Ascending aorta (tissue), 2 donors: ENCODE measurements at regions of chrX and their contacts with region 1.

Region 1: GRCh38 chrX:34656842-34657725 is at the start of gene TMEM47:
- DNase-seq: peak; percentile 18 to 84
- H3K4me3 ChIP-seq: peak within 1 kb of the TSS; percentile 66 to 80
- H3K27ac ChIP-seq: peak within 1 kb of the TSS; percentile 85 to 90
- H3K4me1 ChIP-seq: no peaks in the 10 kb centered on the region
- H3K27me3 ChIP-seq: no peaks in the 10 kb centered on the region
- CTCF ChIP-seq: no peak
- total RNA-seq, gene TMEM47: 117 TPM

Region 2: DNA sequence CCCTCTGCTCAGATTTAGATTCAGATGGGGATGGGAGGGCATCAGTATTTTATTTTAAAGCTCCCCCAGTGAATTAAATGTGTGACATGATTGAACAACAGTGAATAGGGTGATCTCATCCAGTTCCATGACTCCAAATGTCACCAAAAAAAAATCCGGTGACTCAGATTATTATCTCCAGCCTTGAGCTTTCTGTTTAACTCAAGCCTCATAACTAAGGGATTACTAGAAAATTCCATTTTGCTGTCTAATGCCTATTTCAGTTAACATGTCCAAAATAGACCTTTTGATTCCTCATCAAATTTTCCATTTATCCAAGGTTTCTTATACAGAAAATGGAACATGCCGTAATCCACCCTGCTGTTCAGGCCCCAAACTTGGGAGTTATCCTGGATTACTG is 121.9 kb after region 1 on chrX:
- intact Hi-C with region 1: loop called (anchors 5 kb)
- DNase-seq: no peak
- H3K4me3 ChIP-seq: no peak overlapping the region
- H3K27ac ChIP-seq: peak overlapping the region; percentile 53 to 72
- H3K4me1 ChIP-seq: peaks cover 0 to 5% of the 10 kb centered on the region in 2 donors
- H3K27me3 ChIP-seq: no peaks in the 10 kb centered on the region
- CTCF ChIP-seq: no peak

Region 3: DNA sequence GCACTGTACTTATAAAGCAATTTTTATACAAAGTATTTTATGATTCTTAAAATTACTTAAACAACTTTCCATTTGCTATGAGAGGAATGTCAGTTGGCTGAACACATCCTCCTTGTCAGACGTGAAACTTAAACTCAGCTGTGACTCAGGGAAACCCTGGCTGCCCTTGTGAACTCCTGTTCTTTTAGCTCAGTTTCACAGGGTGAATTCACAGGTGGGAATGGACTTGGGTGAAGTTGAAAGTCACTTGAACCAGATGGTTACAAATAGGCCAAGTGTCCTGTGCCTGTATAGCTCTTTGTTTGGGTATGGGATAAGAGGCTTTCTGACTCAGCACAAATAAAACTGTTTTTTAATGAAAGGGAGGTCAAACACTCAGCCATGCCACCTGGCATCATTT is 218.1 kb after region 1 on chrX:
- intact Hi-C with region 1: loop called (anchors 5 kb)
- DNase-seq: peak in 1 of 2 donors; percentile 63
- H3K4me3 ChIP-seq: no peak overlapping the region
- H3K27ac ChIP-seq: peak overlapping the region in 1 of 2 donors; percentile 21
- H3K4me1 ChIP-seq: peaks cover 0 to 3% of the 10 kb centered on the region in 2 donors
- H3K27me3 ChIP-seq: no peaks in the 10 kb centered on the region
- CTCF ChIP-seq: no peak

Region 4: GRCh38 chrX:35046660-35047296 is 389.7 kb after region 1 on chrX:
- intact Hi-C with region 1: loop called (anchors 5 kb)
- DNase-seq: peak in 1 of 2 donors; percentile 70
- H3K4me3 ChIP-seq: no peak overlapping the region
- H3K27ac ChIP-seq: peak overlapping the region; percentile 59 to 67
- H3K4me1 ChIP-seq: peaks cover 0 to 6% of the 10 kb centered on the region in 2 donors
- H3K27me3 ChIP-seq: no peaks in the 10 kb centered on the region
- CTCF ChIP-seq: no peak